HEK293T (cell line): ENCODE measurements at regions of chr17 and their contacts with region 1.

Region 1: DNA sequence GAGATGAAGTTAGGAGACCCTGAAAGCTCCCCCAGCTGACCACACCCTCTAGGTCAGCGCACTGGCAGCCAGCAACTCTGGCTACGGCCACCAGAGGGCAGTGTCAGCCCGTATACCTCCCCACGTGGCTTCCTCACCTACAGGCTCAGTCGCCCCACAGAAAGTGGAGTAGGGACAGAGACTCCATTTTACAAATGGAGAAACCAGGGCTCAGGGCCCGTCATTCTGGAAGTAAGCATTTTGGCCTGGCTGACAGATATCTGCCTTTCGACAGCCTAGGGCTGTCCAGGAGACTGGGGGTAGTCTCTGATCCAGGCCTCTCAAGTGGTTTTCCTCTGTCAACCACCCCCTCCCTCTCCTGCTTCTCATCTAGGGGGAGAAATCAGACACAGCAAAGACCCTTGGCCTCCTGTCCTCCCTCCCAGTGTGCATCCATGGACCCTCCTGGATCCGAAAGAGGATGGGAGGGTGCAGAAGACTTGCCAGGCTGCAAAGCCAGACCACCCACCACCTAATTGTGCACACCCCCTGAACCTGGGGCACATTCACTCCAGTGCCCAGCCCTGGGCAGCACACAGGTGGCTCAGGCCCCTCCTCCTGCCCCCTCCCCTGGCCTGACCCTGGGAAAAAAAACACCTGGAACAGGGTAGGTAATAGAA is 3.8 kb upstream of the HAP1 start:
- DNase-seq: peak; percentile 90

Region 2: GRCh38 chr17:41665566-41666236 is 72.5 kb before region 1 on chr17:
- CTCF ChIA-PET with region 1: interaction called, 12 read pairs
- POLR2A ChIA-PET with region 1: no interaction called
- DNase-seq: peak; percentile 97

Region 3: DNA sequence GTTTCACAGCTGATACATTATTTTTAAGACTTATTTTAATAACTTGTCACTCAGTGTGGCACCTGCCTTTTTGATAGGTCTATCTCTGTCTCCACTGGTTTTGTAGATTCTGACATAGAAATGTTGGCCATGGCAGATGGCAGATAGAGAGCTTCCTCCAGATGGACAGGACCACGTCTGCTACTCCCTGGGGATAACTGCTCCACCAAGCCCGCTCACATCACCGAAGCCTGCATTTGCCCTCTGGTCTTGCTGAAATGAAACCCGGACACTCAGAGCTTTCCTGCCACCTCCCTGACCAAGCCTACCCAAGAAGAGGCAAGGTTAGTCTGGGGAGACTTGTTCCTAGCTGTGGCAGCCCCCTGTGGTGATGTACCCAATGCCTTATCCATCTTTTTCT is 12.7 kb after region 1 on chr17:
- CTCF ChIA-PET with region 1: no interaction called
- POLR2A ChIA-PET with region 1: no interaction called
- DNase-seq: no peak

Region 4: GRCh38 chr17:41786227-41787020 is 48.2 kb after region 1 on chr17 and contains the start of gene JUP:
- CTCF ChIA-PET with region 1: interaction called, 9 read pairs
- POLR2A ChIA-PET with region 1: interaction called, 11 read pairs
- DNase-seq: peak; percentile 100